HEK293T (cell line): ENCODE measurements at regions of chr9 and their contacts with region 1.

Region 1: DNA sequence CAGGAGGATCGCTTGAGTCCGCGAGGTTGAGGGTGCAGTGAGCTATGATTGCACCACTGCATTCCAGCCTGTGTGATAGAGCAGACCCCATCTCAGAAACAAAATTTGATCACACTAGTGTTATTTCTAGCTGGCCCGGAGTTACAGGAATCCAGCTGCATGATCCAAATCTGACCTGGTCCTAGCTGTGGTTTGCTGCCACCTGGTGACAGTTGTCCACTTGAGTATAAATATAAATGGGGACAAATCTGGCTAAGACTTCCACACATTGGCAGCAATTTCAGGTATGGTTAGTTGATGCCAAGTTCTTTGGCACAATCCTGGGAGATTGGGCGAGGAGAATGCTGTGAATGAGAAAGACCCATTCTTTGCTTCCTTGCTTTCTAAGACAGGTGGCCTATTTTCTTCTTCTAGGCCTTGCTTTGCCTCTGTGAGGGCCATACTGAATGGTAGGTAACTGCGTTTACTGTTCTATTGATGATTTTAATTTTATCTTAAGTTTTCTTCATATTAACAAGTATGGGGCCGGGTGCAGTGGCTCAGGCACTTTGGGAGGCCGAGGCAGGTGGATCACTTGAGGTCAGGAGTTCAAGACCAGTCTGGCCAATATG is 35.4 kb downstream of the UBE2R2 start:
- DNase-seq: peak; percentile 52

Region 2: DNA sequence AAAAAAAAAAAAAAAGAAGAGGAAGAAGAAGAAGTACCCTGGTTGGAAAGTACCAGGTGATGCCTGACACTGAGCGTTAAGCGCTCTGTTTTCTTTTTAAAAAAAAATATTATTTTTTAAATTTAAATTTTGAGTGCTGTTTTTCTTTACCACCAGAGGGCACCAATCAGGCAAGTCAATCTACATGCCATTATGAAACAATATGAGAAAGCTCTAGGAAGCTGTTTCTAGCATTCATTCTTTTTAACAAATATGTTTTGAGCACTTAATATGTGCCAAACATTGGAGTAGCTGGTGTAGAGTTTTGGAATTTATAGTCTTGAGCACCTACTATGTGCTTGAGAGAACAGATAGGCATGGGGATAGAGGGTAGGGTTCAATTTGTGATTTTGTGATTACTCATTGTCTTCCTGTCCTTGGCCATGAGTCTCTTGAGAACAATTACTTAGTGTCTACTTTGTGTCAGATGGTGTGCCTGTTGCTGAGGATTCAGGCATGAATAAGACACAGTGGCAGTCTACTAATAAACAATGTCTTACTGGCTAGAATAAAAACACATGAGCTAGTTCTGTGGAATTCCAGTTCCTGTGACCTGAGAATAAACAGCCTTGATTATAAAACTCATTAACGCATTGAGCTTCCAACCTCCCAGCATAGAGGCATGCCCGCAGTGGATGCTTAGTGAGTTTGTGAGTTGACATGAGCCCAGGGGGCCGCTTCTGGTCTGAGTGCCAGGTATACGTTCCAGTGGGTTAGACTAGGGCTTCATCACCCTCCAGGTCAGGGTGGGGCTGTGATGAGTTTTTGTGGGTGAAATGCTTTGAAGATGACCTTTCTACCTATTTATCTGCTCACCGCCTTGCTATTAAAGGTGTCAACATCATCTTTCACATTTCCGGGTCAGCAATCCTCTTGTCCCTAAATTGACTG is 38.3 kb before region 1 on chr9:
- CTCF ChIA-PET with region 1: interaction called, 12 read pairs
- POLR2A ChIA-PET with region 1: no interaction called
- DNase-seq: peak; percentile 35

Region 3: DNA sequence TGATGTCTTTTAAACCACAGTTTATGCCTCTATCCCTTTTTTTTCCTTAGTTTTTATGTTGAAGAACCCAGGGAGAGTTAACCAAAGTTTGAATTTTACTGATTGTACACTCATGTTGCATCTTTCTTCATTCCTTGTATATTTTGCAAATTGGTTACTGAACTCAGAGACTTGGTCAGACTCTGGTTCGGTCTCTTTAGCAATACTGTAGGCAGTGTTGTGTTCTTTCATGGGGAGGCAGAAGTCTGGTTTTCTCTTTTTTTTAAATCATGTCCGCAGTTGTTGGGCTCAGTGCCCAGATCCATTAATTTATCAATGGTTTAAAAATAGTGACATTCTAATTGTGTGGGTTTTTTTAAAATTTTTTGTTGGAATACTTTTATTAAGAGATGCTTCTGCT is 11.9 kb before region 1 on chr9:
- CTCF ChIA-PET with region 1: no interaction called
- POLR2A ChIA-PET with region 1: no interaction called
- DNase-seq: no peak

Region 4: DNA sequence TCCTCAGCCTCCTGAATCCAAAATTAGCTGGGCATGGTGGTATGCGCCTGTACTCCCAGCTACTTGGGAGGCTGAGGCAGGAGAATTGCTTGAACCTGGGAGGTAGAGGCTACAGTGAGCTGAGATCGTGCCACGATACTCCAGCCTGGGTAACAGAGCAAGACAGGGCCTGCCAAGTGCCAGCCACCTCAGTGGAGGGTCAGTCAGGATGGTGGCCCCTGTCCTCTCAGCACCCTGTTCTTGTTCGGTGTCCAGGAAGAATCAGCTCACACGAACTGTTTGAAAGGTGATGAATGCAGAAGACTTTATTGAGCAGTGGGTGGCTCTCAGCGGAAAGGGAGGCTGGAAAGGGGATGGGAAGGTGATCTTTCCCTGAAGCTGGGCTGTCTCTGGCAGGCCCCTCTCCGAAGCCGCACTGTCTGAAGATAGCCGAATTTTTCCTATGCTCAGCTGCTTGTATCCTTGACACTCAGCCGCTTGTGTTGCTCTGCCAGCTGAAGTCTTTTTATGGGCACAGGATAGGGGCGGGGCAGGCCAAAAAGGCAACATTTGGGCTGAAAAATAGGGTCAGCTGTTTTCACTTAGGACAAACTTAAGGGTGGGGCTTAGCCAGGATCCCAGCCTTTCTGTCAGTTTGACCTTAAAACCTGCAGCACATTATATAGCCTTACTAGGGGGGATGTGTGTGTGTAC is 15.6 kb after region 1 on chr9:
- CTCF ChIA-PET with region 1: no interaction called
- POLR2A ChIA-PET with region 1: no interaction called
- DNase-seq: no peak